Psoas muscle (tissue), 8 donors: ENCODE measurements at regions of chr7 and their contacts with region 1.

Region 1: DNA sequence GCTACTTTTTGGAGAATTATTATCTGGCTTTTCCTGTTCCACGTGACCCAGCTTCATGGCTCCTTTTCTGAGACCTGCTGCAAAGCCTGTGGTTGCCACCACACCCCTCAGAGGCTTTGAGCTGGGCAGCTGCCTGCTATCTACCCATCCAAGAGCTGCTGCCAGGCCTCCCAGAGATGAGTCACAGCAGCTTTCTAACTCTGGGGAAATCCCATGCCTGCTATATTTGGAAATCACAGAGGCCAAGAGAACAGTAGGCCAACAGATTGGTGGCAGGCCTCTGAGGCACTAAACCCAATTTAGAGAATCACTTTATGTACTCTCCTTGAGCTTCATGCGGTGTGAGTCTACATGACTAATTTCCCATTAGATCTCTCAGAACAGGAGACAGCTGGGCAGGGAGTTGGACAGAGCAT is 35.2 kb downstream of the SGCE start:
- DNase-seq: peak; percentile 81 to 91
- ATAC-seq: peak; percentile 98 to 100 (median 98)
- H3K4me3 ChIP-seq: no peak overlapping the region
- H3K27ac ChIP-seq: peak overlapping the region; percentile 90
- H3K4me1 ChIP-seq: peaks cover 24% of the 10 kb centered on the region
- H3K27me3 ChIP-seq: no peaks in the 10 kb centered on the region
- CTCF ChIP-seq: no peak

Region 2: DNA sequence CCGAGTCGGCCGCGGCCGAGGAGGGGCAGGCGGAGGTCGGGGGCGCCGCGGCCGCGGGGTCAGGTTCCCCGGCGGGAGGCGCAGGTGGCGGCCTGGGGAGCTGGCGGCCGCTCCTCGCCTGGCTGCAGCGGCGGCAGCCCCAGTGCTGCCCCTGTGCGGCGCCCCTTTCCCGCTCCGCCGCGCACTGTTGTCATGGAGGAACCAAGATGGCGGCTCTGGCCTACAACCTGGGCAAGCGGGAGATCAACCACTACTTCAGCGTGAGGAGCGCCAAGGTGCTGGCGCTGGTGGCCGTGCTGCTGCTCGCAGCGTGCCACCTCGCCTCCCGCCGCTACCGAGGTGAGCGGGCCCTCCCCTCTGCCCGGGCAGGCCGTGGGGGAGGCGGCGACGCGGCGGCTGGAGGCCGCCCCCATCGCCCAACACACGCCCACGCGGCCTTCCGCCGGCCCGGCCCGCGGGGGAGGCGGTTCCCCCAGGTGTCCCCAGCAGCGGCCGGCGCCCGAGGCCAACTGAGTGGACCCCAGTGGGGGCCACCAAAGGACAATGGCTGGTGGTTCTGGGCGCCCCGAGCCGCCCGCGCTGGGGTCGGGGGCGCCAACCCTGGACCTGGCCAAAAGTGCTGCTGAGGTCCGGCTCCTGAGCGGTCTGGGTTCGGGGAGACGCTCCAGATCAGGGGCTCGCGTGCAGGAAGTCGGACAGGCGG is 110.7 kb before region 1 on chr7:
- intact Hi-C with region 1: loop called in 1 of 2 experiments (anchors 10 kb)
- DNase-seq: peak; percentile 63 to 80
- ATAC-seq: peak; percentile 82 to 88 (median 85)
- H3K4me3 ChIP-seq: peak overlapping the region; percentile 98
- H3K27ac ChIP-seq: peak overlapping the region; percentile 97
- H3K4me1 ChIP-seq: peaks cover 41% of the 10 kb centered on the region
- H3K27me3 ChIP-seq: no peaks in the 10 kb centered on the region
- CTCF ChIP-seq: peak; percentile 40

Region 3: DNA sequence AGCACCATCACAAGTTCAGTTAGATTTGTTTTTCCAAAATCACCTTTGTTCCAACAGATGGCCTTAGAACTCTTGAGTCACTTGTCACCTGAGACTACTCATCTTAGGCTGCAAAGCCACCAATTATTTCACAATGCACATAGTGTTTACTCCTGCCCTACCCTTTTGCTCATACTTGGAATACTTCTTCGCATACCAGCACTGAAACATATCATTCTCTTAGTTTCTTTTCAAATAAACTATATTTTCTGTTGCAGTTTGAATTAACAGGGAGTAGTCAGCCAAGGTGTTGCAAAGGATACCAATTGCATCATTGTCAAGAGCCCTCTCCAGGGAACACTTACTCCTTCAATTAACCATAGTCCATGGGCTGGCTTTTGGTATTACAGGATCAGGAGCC is 40.1 kb before region 1 on chr7:
- intact Hi-C with region 1: loop called in 1 of 2 experiments (anchors 5 kb)
- DNase-seq: no peak
- ATAC-seq: peak; percentile 63 to 79 (median 74)
- H3K4me3 ChIP-seq: no peak overlapping the region
- H3K27ac ChIP-seq: no peak overlapping the region
- H3K4me1 ChIP-seq: peaks cover 21% of the 10 kb centered on the region
- H3K27me3 ChIP-seq: no peaks in the 10 kb centered on the region
- CTCF ChIP-seq: no peak

Region 4: GRCh38 chr7:94605031-94605430 is 15.7 kb before region 1 on chr7:
- intact Hi-C with region 1: no loop called
- DNase-seq: no peak
- ATAC-seq: no peak
- H3K4me3 ChIP-seq: no peak overlapping the region
- H3K27ac ChIP-seq: no peak overlapping the region
- H3K4me1 ChIP-seq: no peaks in the 10 kb centered on the region
- H3K27me3 ChIP-seq: no peaks in the 10 kb centered on the region
- CTCF ChIP-seq: no peak